GM10248 (cell line): ENCODE measurements at regions of chr5 and their contacts with region 1.

Region 1: DNA sequence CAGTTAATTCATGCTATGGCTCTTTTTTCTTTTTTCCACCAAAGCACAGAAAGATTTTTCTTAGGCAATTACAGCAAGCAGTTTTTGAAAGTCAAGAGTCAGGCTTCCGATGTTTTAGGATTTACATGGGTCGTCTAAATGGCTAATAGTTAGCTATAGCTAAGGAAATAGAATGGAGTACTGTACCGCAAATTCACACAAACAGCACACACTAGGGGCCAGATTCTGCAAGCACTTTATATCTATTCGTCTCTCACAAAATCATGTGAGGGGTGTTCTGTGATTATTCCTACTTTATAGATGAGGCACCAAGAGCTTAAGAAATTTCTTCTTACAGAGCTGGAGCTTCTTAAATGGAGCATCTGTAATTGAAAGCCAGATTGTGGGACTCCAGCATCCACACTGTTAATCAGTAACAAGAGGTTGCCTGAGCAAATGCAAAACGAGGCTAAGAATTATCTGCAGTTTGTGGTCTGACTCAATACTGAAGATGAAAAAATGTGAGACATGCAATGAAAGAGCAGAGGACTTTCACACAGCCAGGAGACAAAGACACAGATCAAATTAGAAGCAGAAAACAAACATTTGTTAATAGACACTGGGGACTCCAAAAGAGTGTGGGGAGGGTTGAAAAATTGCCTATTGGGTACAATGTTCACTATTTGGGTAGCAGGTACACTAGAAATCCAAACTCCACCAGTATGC is 62.7 kb upstream of the CTXN3 start:
- DNase-seq: peak; percentile 50
- CTCF ChIP-seq: no peak

Region 2: GRCh38 chr5:127326428-127326827 is 259.8 kb before region 1 on chr5:
- CTCF ChIA-PET with region 1: no interaction called
- POLR2A ChIA-PET with region 1: no interaction called
- DNase-seq: no peak
- CTCF ChIP-seq: no peak

Region 3: GRCh38 chr5:127498548-127498947 is 87.7 kb before region 1 on chr5:
- CTCF ChIA-PET with region 1: no interaction called
- POLR2A ChIA-PET with region 1: no interaction called
- DNase-seq: no peak
- CTCF ChIP-seq: no peak

Region 4: GRCh38 chr5:127572930-127573329 is 13.3 kb before region 1 on chr5:
- CTCF ChIA-PET with region 1: interaction called, 47 read pairs
- POLR2A ChIA-PET with region 1: interaction called, 4 read pairs
- DNase-seq: no peak
- CTCF ChIP-seq: no peak

Region 5: GRCh38 chr5:127602481-127602880 is 16.3 kb after region 1 on chr5:
- CTCF ChIA-PET with region 1: interaction called, 13 read pairs
- POLR2A ChIA-PET with region 1: no interaction called
- DNase-seq: no peak
- CTCF ChIP-seq: no peak